ENCODE measurements at regions of chr14 and their contacts with region 1.

Region 1: DNA sequence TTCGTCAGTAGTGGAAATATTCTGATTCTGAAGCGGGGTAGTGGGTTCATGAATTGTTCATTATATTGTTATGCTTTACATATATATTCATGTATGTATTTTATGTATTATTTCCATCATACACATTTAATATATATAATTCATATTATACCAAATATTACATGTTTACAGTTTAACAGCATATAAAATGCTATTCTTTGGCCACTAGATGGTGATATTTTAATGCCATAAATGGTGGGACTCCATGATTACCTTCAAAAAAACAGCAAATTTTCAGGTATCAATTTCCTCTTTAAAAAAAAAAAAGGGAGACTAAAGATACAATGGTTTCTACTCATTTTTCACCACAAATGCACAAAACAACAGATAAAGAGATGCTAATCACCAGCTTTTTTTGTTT is 41.0 kb downstream of the BDKRB1 start:
- DNase-seq: no peak
- ATAC-seq: no peak

Region 2: GRCh38 chr14:96424109-96424989 is 127.3 kb after region 1 on chr14:
- intact Hi-C with region 1: loop called (anchors 5 kb)
- DNase-seq: no peak
- ATAC-seq: peak; percentile 86